GM23248 (cell line): ENCODE measurements at regions of chr6 and their contacts with region 1.

Region 1: DNA sequence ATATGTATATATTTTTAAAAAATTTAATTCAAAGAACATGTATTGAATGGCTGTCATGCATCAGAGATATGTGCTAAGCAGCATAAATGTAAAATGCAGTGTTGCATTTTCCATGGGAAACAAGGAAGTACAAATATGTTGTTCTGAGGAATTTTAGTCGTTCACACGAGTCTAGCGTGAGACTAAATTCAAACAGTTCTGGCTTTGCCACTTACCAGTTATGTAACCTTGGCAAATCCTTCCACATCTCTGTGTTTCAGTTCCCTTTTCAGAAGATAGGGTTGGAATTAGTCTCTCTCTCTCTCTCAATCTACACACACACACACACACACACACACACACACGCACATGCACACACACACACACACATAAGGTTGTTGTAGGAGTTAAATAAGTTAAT is 305.4 kb downstream of the UTRN start:
- DNase-seq: no peak
- H3K4me3 ChIP-seq: no peak overlapping the region
- H3K27ac ChIP-seq: no peak overlapping the region
- H3K4me1 ChIP-seq: peaks cover 5% of the 10 kb centered on the region; the same call in 1 of the 2 replicates
- H3K27me3 ChIP-seq: no peaks in the 10 kb centered on the region

Region 2: GRCh38 chr6:144248476-144249301 is 341.8 kb before region 1 on chr6:
- in situ Hi-C with region 1: no loop called
- DNase-seq: peak; percentile 92
- H3K4me3 ChIP-seq: peak overlapping the region; percentile 44
- H3K27ac ChIP-seq: peak overlapping the region; percentile 93
- H3K4me1 ChIP-seq: peaks cover 37% of the 10 kb centered on the region
- H3K27me3 ChIP-seq: no peaks in the 10 kb centered on the region

Region 3: GRCh38 chr6:145214570-145214969 is 624.0 kb after region 1 on chr6:
- in situ Hi-C with region 1: loop called (anchors 10 kb)
- DNase-seq: peak; percentile 52
- H3K4me3 ChIP-seq: no peak overlapping the region
- H3K27ac ChIP-seq: no peak overlapping the region
- H3K4me1 ChIP-seq: no peaks in the 10 kb centered on the region
- H3K27me3 ChIP-seq: no peaks in the 10 kb centered on the region